ENCODE measurements at regions of chr15 and their contacts with region 1.

Region 1: DNA sequence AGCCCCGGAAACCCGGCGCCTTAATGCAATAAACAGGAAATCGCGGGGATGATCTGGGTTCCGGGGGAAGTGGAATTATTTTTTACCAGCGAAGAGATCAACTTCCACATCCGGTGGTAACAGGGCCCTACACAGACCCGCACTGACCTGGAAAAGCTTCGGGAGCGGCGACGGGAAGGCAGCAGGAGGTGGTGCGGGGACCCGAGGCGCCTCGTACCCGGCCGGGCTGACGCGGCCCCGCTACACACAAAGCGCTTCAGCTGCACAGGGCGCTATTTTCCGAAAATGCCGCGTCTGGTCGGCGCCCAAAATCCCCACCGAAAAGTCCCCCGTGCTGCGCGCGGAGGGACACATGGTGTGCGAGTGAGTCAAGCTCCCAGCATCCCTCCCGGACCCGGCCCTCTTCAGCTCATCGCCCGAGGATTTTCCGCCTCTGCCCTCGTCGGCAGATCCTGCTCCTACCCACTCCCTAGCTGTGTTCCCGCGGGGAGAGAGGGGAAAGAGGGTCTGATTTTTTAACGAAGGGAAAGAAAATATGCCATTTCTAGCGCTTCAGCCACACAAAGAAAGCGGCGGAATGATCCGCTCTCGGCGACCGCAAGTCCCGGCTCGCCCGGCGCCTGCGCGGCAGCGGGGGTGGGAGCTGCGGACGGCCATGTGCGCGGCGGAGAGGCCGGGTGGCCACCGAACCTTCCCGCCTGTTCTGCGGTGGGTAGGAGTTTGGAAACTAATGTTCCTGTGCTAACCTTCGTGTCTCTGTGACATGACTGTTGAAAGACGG is at the start of gene GABPB1:
- DNase-seq: peak; percentile 85 to 95 (median 88)
- H3K4me3 ChIP-seq: peak within 1 kb of the TSS; percentile 75 to 90 (median 84)
- H3K4me3 Mint-ChIP-seq: peak within 1 kb of the TSS; percentile 93 to 96
- H3K27ac ChIP-seq: peak within 1 kb of the TSS; percentile 95 to 96
- H3K27ac Mint-ChIP-seq: peak within 1 kb of the TSS; percentile 99 to 100 (median 99)
- H3K4me1 ChIP-seq: peaks cover 45 to 55% of the 10 kb centered on the region in 2 donors
- H3K4me1 Mint-ChIP-seq: peaks cover 48% of the 10 kb centered on the region
- H3K27me3 ChIP-seq: no peaks in the 10 kb centered on the region
- H3K27me3 Mint-ChIP-seq: no peaks in the 10 kb centered on the region
- CTCF ChIP-seq: no peak
- polyA plus RNA-seq, gene GABPB1: 12.9 to 15.1 (median 14.9) TPM

Region 2: GRCh38 chr15:50066192-50066591 is 288.8 kb before region 1 on chr15:
- intact Hi-C with region 1: loop called in 1 of 2 experiments (anchors 10 kb)
- DNase-seq: peak; percentile 91 to 97 (median 97)
- H3K4me3 ChIP-seq: no peak overlapping the region
- H3K4me3 Mint-ChIP-seq: no peak overlapping the region
- H3K27ac ChIP-seq: peak overlapping the region in 1 of 2 donors; percentile 91
- H3K27ac Mint-ChIP-seq: peak overlapping the region; percentile 95 to 99 (median 96)
- H3K4me1 ChIP-seq: peaks cover 29 to 49% of the 10 kb centered on the region in 2 donors
- H3K4me1 Mint-ChIP-seq: peaks cover 46% of the 10 kb centered on the region
- H3K27me3 ChIP-seq: no peaks in the 10 kb centered on the region
- H3K27me3 Mint-ChIP-seq: no peaks in the 10 kb centered on the region
- CTCF ChIP-seq: no peak

Region 3: GRCh38 chr15:50116473-50116872 is 238.6 kb before region 1 on chr15:
- intact Hi-C with region 1: loop called in 1 of 2 experiments (anchors 10 kb)
- DNase-seq: peak in 2 of 3 donors; percentile 73 to 78
- H3K4me3 ChIP-seq: no peak overlapping the region
- H3K4me3 Mint-ChIP-seq: no peak overlapping the region
- H3K27ac ChIP-seq: peak overlapping the region in 1 of 2 donors; percentile 93
- H3K27ac Mint-ChIP-seq: peak overlapping the region; percentile 60 to 98 (median 93)
- H3K4me1 ChIP-seq: peaks cover 66 to 72% of the 10 kb centered on the region in 2 donors
- H3K4me1 Mint-ChIP-seq: peaks cover 71% of the 10 kb centered on the region
- H3K27me3 ChIP-seq: no peaks in the 10 kb centered on the region
- H3K27me3 Mint-ChIP-seq: peaks cover 0 to 3% (median 0%) of the 10 kb centered on the region in 3 donors
- CTCF ChIP-seq: peak; percentile 73

Region 4: GRCh38 chr15:50424066-50424890 is 69.2 kb after region 1 on chr15 and contains the start of gene USP8:
- intact Hi-C with region 1: loop called (anchors 5 kb)
- DNase-seq: peak; percentile 92 to 96 (median 93)
- H3K4me3 ChIP-seq: peak within 1 kb of the TSS; percentile 71 to 97 (median 95)
- H3K4me3 Mint-ChIP-seq: peak within 1 kb of the TSS; percentile 92 to 97
- H3K27ac ChIP-seq: peak within 1 kb of the TSS; percentile 82 to 99
- H3K27ac Mint-ChIP-seq: peak within 1 kb of the TSS; percentile 98 to 99 (median 99)
- H3K4me1 ChIP-seq: peaks cover 15 to 24% of the 10 kb centered on the region in 2 donors
- H3K4me1 Mint-ChIP-seq: peaks cover 28% of the 10 kb centered on the region
- H3K27me3 ChIP-seq: no peaks in the 10 kb centered on the region
- H3K27me3 Mint-ChIP-seq: peaks cover 0 to 3% (median 0%) of the 10 kb centered on the region in 3 donors
- CTCF ChIP-seq: no peak
- polyA plus RNA-seq, gene USP8: 32.1 to 62.4 (median 37.3) TPM

Region 5: DNA sequence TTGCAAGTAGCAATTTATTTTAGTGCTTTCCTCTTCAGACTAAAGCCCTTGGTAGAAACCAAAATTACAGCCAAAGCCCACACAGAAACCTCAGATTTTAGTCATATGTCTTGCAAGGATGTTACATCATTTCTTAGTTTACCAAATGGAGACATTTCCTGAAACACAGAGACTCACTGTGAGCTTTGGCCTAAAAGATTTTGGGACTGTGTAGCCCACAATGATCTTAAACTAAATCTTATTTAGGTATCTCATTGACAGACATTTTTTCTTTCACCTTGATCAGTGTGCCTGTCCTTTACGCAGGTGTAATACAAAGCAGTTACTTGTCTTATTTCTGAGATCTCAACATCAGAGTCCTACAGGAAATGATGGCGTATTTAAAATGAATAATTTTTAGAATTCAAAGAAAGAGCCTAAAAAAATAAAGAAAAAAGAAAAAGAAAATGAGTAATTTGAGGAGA is 525.7 kb after region 1 on chr15:
- intact Hi-C with region 1: loop called in 1 of 2 experiments (anchors 10 kb)
- DNase-seq: peak; percentile 48 to 86 (median 79)
- H3K4me3 ChIP-seq: peak overlapping the region in 1 of 3 experiments; percentile 10
- H3K4me3 Mint-ChIP-seq: peak overlapping the region in 1 of 2 donors; percentile 26
- H3K27ac ChIP-seq: peak overlapping the region in 1 of 2 donors; percentile 86
- H3K27ac Mint-ChIP-seq: peak overlapping the region; percentile 78 to 93 (median 85)
- H3K4me1 ChIP-seq: peaks cover 70 to 82% of the 10 kb centered on the region in 2 donors
- H3K4me1 Mint-ChIP-seq: peaks cover 74% of the 10 kb centered on the region
- H3K27me3 ChIP-seq: no peaks in the 10 kb centered on the region
- H3K27me3 Mint-ChIP-seq: no peaks in the 10 kb centered on the region
- CTCF ChIP-seq: no peak

Region 6: GRCh38 chr15:50908210-50909009 is 553.4 kb after region 1 on chr15 and contains the start of gene AP4E1:
- intact Hi-C with region 1: loop called in 1 of 2 experiments (anchors 10 kb)
- DNase-seq: peak; percentile 91 to 97 (median 94)
- H3K4me3 ChIP-seq: peak within 1 kb of the TSS; percentile 72 to 96 (median 95)
- H3K4me3 Mint-ChIP-seq: peak within 1 kb of the TSS; percentile 97 to 100
- H3K27ac ChIP-seq: peak within 1 kb of the TSS; percentile 77 to 92
- H3K27ac Mint-ChIP-seq: peak within 1 kb of the TSS; percentile 86 to 99 (median 94)
- H3K4me1 ChIP-seq: peaks cover 43 to 47% of the 10 kb centered on the region in 2 donors
- H3K4me1 Mint-ChIP-seq: peaks cover 39% of the 10 kb centered on the region
- H3K27me3 ChIP-seq: no peaks in the 10 kb centered on the region
- H3K27me3 Mint-ChIP-seq: peaks cover 0 to 2% (median 0%) of the 10 kb centered on the region in 3 donors
- CTCF ChIP-seq: peak; percentile 94
- polyA plus RNA-seq, gene AP4E1: 4.1 to 7.7 (median 5.3) TPM

Measured in CD14-positive monocyte (primary cell).